ENCODE measurements at regions of chr19 and their contacts with region 1.

Region 1: GRCh38 chr19:12789904-12790619 is 1.2 kb upstream of the JUNB start:
- DNase-seq: peak; percentile 82 to 96 (median 90)
- ATAC-seq: peak; percentile 35 to 38
- H3K4me3 Mint-ChIP-seq: peak overlapping the region; percentile 91 to 99 (median 96)
- H3K27ac Mint-ChIP-seq: peak overlapping the region; percentile 97 to 100 (median 100)
- H3K4me1 Mint-ChIP-seq: peaks cover 22 to 50% (median 39%) of the 10 kb centered on the region in 4 donors
- H3K27me3 Mint-ChIP-seq: peaks cover 0 to 4% (median 0%) of the 10 kb centered on the region in 5 donors

Region 2: DNA sequence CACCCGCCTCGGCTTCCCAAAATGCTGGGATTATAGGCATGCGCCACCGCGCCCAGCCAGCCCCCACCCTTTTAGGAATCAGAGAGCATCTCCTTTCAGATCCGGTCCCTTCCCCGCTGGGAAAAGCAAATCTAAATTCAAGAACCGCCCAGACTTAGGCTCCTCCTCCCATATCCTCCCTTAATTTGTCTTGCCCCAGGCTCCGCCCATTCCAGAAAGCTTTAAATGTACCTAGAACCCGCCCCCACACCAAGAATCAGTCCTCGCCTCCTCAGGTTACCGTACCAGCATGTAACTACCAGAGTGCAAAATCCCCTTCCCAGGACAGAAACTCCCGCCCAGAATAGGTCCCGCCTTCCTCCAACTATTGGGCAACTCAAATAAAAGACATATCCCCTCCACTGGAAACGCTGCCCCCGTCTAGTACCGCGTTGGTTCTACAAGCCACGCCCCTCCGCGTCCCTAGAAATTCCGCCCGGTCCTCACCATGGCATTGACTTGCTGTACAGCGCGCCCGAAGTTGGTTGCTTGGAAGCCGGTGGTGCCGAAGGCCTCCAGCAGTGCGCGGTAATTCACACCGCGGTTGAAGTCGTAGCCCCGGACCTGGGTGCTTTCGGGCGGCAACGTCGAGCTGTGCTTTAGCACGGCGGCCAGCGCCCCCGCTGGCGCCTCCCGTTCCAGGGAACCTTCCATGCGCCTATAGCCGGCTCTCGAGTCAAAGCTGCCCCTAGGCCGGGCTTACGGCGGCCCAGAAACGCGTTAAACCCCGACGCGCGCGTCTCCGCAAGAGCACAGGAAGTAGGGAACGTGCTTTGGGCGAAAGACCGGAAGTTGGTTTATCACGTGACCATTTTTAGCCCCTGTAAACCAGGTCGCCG is 108.7 kb before region 1 on chr19 and contains the start of gene DHPS:
- POLR2A ChIA-PET with region 1: interaction called, 23 read pairs
- DNase-seq: peak; percentile 72 to 97 (median 89)
- ATAC-seq: peak; percentile 79 to 84
- H3K4me3 Mint-ChIP-seq: peak within 1 kb of the TSS; percentile 89 to 98 (median 96)
- H3K27ac Mint-ChIP-seq: peak within 1 kb of the TSS; percentile 89 to 98 (median 96)
- H3K4me1 Mint-ChIP-seq: peaks cover 17 to 37% (median 26%) of the 10 kb centered on the region in 4 donors
- H3K27me3 Mint-ChIP-seq: peaks cover 0 to 1% (median 0%) of the 10 kb centered on the region in 5 donors
- polyA plus RNA-seq, gene DHPS: 74.8 to 108 (median 88.9) TPM

Region 3: GRCh38 chr19:12722566-12723380 is 67.3 kb before region 1 on chr19:
- POLR2A ChIA-PET with region 1: interaction called, 25 read pairs
- DNase-seq: peak; percentile 83 to 98 (median 92)
- ATAC-seq: peak; percentile 88 to 92
- H3K4me3 Mint-ChIP-seq: peak overlapping the region; percentile 85 to 96 (median 92)
- H3K27ac Mint-ChIP-seq: peak overlapping the region; percentile 88 to 97 (median 93)
- H3K4me1 Mint-ChIP-seq: peaks cover 28 to 47% (median 40%) of the 10 kb centered on the region in 4 donors
- H3K27me3 Mint-ChIP-seq: no peaks in the 10 kb centered on the region

Region 4: GRCh38 chr19:12736995-12737834 is 52.8 kb before region 1 on chr19 and contains the start of gene GET3:
- POLR2A ChIA-PET with region 1: interaction called, 23 read pairs
- DNase-seq: peak; percentile 63 to 92 (median 78)
- ATAC-seq: peak; percentile 83 to 87
- H3K4me3 Mint-ChIP-seq: peak within 1 kb of the TSS; percentile 96 to 100 (median 99)
- H3K27ac Mint-ChIP-seq: peak within 1 kb of the TSS; percentile 93 to 100 (median 98)
- H3K4me1 Mint-ChIP-seq: peaks cover 21 to 46% (median 43%) of the 10 kb centered on the region in 4 donors
- H3K27me3 Mint-ChIP-seq: no peaks in the 10 kb centered on the region
- polyA plus RNA-seq, gene GET3: 46.8 to 72.3 (median 55.7) TPM

Region 5: GRCh38 chr19:12777217-12778016 is 12.6 kb before region 1 on chr19:
- POLR2A ChIA-PET with region 1: interaction called, 1,021 read pairs
- DNase-seq: peak; percentile 66 to 90 (median 82)
- ATAC-seq: peak; percentile 5 to 23
- H3K4me3 Mint-ChIP-seq: peak overlapping the region; percentile 79 to 88 (median 84)
- H3K27ac Mint-ChIP-seq: peak overlapping the region; percentile 72 to 97 (median 93)
- H3K4me1 Mint-ChIP-seq: peaks cover 21 to 49% (median 36%) of the 10 kb centered on the region in 4 donors
- H3K27me3 Mint-ChIP-seq: no peaks in the 10 kb centered on the region

Region 6: GRCh38 chr19:12806239-12807081 is 16.4 kb after region 1 on chr19 and contains the start of gene RNASEH2A:
- POLR2A ChIA-PET with region 1: interaction called, 61 read pairs
- DNase-seq: peak; percentile 76 to 88 (median 83)
- ATAC-seq: peak; percentile 89 to 90
- H3K4me3 Mint-ChIP-seq: peak within 1 kb of the TSS; percentile 85 to 97 (median 93)
- H3K27ac Mint-ChIP-seq: peak within 1 kb of the TSS; percentile 80 to 95 (median 90)
- H3K4me1 Mint-ChIP-seq: peaks cover 13 to 22% (median 21%) of the 10 kb centered on the region in 4 donors
- H3K27me3 Mint-ChIP-seq: no peaks in the 10 kb centered on the region
- polyA plus RNA-seq, gene RNASEH2A: 16.3 to 22.6 (median 21.9) TPM

Region 7: DNA sequence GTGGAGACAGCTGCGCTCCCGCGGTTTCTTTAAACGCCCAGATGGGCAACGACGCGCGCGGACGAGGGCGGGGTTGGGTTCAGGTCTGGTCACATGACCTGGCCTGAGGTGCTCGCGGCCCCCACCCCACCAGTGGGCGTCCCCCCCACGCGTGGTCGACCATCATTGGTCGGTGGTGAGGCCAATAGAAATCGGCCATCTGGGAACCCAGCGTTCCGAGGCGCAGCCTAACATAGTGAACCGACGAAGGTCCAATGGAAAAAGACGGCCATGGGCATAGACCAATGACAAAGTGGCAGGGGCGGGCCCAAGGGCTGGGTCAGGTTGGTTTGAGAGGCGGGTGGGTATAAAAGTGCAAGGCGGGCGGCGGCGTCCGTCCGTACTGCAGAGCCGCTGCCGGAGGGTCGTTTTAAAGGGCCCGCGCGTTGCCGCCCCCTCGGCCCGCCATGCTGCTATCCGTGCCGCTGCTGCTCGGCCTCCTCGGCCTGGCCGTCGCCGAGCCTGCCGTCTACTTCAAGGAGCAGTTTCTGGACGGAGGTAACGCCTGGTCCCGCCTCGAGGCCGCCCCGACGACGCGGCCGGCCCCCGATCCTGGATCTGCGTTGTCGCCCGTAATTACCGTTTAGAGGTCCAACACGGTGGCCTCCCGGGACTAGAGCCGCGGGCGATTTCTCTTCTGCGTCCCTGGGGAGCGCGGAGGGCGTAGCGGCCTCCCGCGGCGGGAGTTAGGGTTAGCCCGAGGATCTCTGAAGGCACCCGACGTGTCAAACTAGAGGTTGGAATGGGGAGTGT is 148.4 kb after region 1 on chr19 and contains the start of gene CALR:
- POLR2A ChIA-PET with region 1: interaction called, 18 read pairs
- DNase-seq: peak; percentile 95 to 100 (median 100)
- ATAC-seq: peak; percentile 88 to 91
- H3K4me3 Mint-ChIP-seq: peak within 1 kb of the TSS; percentile 97 to 100 (median 98)
- H3K27ac Mint-ChIP-seq: peak within 1 kb of the TSS; percentile 94 to 99 (median 96)
- H3K4me1 Mint-ChIP-seq: peaks cover 25 to 70% (median 61%) of the 10 kb centered on the region in 4 donors
- H3K27me3 Mint-ChIP-seq: no peaks in the 10 kb centered on the region
- polyA plus RNA-seq, gene CALR: 135 to 190 (median 165) TPM

Measured in naive thymus-derived CD8-positive, alpha-beta T cell (primary cell).